ENCODE measurements at regions of chr4 and their contacts with region 1.

Region 1: GRCh38 chr4:156968479-156968984 is 3.1 kb downstream of the PDGFC start:
- DNase-seq: peak; percentile 82
- H3K4me3 Mint-ChIP-seq: peak overlapping the region; percentile 96
- H3K27ac Mint-ChIP-seq: peak overlapping the region; percentile 25
- H3K4me1 Mint-ChIP-seq: peaks cover 41% of the 10 kb centered on the region
- H3K27me3 Mint-ChIP-seq: no peaks in the 10 kb centered on the region
- CTCF ChIP-seq: peak; percentile 77

Region 2: DNA sequence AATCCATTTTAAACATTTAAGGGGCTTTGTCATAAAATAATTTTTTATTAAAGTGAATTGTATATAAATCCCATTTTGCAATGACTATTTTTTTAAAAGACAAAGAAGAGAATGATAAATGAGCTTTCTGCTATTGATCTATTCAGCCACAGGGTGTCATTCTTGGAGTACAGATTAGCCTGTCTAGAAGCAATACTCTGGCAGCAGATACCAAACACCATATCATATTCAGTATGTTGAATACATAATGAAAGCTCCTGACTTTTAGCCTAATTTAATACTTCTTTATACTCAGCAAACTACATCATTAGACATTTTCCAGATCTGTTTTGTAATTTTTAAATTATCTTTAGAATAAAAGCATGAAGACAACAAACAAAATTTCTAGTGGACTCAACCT is 493.2 kb before region 1 on chr4:
- CTCF ChIA-PET with region 1: interaction called, 93 read pairs
- POLR2A ChIA-PET with region 1: interaction called, 53 read pairs
- intact Hi-C with region 1: loop called (anchors 1 kb)
- DNase-seq: peak; percentile 70
- H3K4me3 Mint-ChIP-seq: no peak overlapping the region
- H3K27ac Mint-ChIP-seq: peak overlapping the region; percentile 88
- H3K4me1 Mint-ChIP-seq: peaks cover 11% of the 10 kb centered on the region
- H3K27me3 Mint-ChIP-seq: no peaks in the 10 kb centered on the region
- CTCF ChIP-seq: peak; percentile 65

Region 3: DNA sequence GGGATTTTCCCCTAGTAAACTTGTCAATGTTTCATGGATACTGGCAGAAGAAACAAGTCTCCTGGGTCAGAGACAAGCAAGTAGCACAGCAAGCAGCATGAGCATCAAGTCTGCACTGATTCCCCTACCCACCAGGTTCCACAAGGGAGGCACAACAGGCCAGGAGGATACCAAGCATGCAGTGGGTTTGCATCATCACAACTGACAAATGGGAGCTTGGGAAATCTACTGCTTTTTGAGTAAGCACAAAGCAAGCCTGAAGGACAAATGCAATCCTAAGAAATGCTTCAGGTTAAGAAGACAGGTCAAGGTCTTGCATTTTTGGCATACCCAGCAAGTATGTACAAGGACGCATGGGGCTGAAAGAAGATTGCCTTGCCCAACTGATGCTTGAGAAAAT is 276.5 kb before region 1 on chr4:
- CTCF ChIA-PET with region 1: interaction called, 5 read pairs
- POLR2A ChIA-PET with region 1: no interaction called
- intact Hi-C with region 1: loop called (anchors 5 kb)
- DNase-seq: peak; percentile 5
- H3K4me3 Mint-ChIP-seq: no peak overlapping the region
- H3K27ac Mint-ChIP-seq: no peak overlapping the region
- H3K4me1 Mint-ChIP-seq: no peaks in the 10 kb centered on the region
- H3K27me3 Mint-ChIP-seq: no peaks in the 10 kb centered on the region
- CTCF ChIP-seq: no peak

Region 4: DNA sequence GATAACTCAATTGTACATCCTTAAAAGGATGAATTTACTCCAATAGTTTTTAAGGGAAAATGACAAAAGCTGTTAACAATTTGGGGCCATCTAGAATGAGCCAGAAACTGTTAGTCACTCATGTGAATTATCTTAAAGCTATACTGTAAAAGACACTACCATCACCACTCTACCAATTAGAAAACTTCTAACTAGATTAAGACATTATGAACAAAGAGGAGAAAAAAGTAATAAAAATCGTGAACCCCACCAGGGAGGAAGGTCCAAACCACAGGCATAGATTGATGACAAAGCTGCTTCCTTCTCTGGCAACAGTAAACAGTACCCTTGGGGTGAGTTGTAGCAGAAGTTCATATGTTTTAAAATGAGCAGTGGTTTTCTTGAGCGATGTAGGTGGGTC is 103.1 kb before region 1 on chr4:
- CTCF ChIA-PET with region 1: no interaction called
- POLR2A ChIA-PET with region 1: no interaction called
- intact Hi-C with region 1: loop called (anchors 1 kb)
- DNase-seq: no peak
- H3K4me3 Mint-ChIP-seq: no peak overlapping the region
- H3K27ac Mint-ChIP-seq: no peak overlapping the region
- H3K4me1 Mint-ChIP-seq: peaks cover 16% of the 10 kb centered on the region
- H3K27me3 Mint-ChIP-seq: no peaks in the 10 kb centered on the region
- CTCF ChIP-seq: no peak

Region 5: GRCh38 chr4:156923525-156923924 is 45.0 kb before region 1 on chr4:
- CTCF ChIA-PET with region 1: no interaction called
- POLR2A ChIA-PET with region 1: no interaction called
- intact Hi-C with region 1: no loop called
- DNase-seq: no peak
- H3K4me3 Mint-ChIP-seq: no peak overlapping the region
- H3K27ac Mint-ChIP-seq: peak overlapping the region; percentile 1
- H3K4me1 Mint-ChIP-seq: peaks cover 40% of the 10 kb centered on the region
- H3K27me3 Mint-ChIP-seq: no peaks in the 10 kb centered on the region
- CTCF ChIP-seq: no peak

Region 6: DNA sequence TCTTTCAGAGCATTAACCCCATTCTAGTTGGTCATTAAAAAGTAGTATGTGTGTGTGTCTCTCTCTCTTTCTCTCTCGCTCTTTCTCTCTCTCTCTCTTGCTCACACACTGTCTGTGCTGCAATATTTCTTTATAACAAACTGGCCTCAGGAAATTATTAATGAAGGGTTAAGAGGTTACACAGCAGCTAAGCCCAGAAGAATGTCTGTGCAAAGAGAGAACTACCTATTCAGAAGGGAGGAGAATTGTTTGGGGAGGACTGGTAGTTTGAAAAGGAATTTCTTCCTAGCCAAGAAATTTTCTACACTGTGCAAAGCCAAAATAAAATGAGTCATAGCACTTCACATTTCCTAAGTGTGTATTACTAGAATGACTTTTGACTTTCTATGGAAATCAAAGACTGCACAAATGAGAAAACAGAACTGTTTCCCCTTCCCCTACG is 19.1 kb before region 1 on chr4:
- CTCF ChIA-PET with region 1: interaction called, 11 read pairs
- POLR2A ChIA-PET with region 1: interaction called, 27 read pairs
- intact Hi-C with region 1: loop called (anchors 1 kb)
- DNase-seq: peak; percentile 80
- H3K4me3 Mint-ChIP-seq: peak overlapping the region; percentile 51
- H3K27ac Mint-ChIP-seq: peak overlapping the region; percentile 96
- H3K4me1 Mint-ChIP-seq: peaks cover 78% of the 10 kb centered on the region
- H3K27me3 Mint-ChIP-seq: no peaks in the 10 kb centered on the region
- CTCF ChIP-seq: no peak

Region 7: DNA sequence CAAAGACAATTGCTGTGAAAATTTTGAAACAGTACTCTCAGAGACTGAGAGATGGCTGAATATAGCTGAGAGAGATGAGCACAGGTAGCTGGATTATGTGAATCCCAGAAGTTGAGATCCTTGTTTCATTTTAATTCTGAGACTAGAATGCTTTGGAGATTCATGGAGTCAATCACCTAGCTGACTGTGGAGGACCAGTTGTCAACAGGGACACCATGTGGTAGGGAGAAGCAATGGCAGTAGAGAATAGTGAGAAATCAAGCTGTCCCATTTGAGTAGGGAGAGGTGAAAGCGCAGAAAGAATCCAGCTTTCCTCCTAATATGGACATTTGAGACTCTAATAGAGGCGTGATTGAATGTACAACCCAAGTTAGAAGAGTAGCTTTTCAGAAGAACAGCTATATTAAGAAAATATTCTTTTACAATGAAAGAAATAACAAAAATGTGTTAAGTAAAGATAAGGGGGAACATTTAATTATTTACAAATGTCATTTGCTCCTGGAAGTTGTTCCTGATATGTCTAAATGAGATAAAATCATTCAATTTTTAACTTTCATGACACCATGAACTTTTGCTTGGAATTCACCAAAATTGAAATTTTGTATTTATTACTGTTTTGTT is 77.1 kb after region 1 on chr4:
- CTCF ChIA-PET with region 1: interaction called, 61 read pairs
- POLR2A ChIA-PET with region 1: interaction called, 17 read pairs
- intact Hi-C with region 1: loop called (anchors 1 kb)
- DNase-seq: peak; percentile 84
- H3K4me3 Mint-ChIP-seq: no peak overlapping the region
- H3K27ac Mint-ChIP-seq: peak overlapping the region; percentile 55
- H3K4me1 Mint-ChIP-seq: peaks cover 22% of the 10 kb centered on the region
- H3K27me3 Mint-ChIP-seq: no peaks in the 10 kb centered on the region
- CTCF ChIP-seq: peak; percentile 89

Measured in MCF 10A (cell line).